Activated T-helper 2 cell treated with anti-CD3 and anti-CD28 coated beads, Interferon-gamma antibody, Interleukin-2, Interleukin-4, amounts not matched to agents 10 μg/mL and 5 μg/mL and 100 μg/mL, durations not matched to agents 14 hours and 24 hours and 36 hours (primary cell): ENCODE measurements at regions of chr12 and their contacts with region 1.

Region 1: DNA sequence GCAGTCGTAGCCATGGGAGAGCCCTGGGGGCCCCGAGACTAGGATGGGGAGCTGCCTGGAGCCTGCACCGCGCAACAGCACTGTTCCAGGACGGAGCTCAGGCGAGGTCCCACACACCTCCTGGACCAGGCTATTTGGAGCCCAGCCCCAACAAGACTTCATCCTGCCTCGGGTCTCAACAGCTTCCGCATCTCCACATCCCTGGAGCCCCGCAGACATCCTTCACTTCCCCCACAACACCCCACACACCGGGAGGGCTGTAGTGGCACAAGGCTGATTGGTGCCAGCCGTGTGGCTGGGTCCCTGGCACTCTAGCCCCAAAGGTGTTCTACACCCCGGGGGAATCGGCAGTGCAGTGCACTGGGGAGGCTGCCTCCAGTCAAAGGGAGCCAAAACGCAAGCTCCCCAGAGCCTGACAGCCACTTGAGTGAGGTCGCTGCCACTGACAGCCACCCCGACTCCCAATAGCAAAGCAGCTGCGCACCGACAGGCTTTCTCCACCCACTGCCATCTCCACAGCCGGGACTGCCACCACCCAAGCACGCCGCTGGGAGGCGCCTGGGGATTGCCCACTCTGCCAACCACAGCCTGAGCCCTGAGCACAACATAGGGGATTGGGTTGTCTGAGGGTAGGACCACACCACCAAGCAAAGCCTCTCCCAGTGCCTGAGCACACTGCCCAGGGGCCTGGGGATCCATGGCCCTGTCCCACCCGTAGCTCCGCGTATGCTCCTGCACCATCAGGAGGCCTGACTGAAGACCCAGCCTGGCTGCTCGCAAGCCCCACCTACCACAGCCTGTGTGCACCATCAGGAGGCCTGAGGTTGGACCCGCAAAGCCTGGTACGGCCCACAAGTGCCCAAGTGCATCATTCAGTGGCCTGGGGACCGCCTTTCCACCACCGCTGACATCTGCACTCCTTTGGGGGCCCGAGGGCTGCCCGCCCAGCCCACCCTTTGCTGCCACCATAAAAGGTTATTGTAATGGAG is 13.2 kb upstream of the KLRF1 start:
- DNase-seq: peak; percentile 88
- H3K4me3 Mint-ChIP-seq: peak overlapping the region; percentile 83
- H3K27ac Mint-ChIP-seq: peak overlapping the region; percentile 56
- H3K4me1 Mint-ChIP-seq: peaks cover 20% of the 10 kb centered on the region
- H3K27me3 Mint-ChIP-seq: peaks cover 18% of the 10 kb centered on the region

Region 2: GRCh38 chr12:9750276-9751203 is 63.6 kb before region 1 on chr12:
- intact Hi-C with region 1: loop called (anchors 1 kb)
- DNase-seq: peak; percentile 46
- H3K4me3 Mint-ChIP-seq: no peak overlapping the region
- H3K27ac Mint-ChIP-seq: peak overlapping the region; percentile 44
- H3K4me1 Mint-ChIP-seq: peaks cover 48% of the 10 kb centered on the region
- H3K27me3 Mint-ChIP-seq: peaks cover 1% of the 10 kb centered on the region

Region 3: DNA sequence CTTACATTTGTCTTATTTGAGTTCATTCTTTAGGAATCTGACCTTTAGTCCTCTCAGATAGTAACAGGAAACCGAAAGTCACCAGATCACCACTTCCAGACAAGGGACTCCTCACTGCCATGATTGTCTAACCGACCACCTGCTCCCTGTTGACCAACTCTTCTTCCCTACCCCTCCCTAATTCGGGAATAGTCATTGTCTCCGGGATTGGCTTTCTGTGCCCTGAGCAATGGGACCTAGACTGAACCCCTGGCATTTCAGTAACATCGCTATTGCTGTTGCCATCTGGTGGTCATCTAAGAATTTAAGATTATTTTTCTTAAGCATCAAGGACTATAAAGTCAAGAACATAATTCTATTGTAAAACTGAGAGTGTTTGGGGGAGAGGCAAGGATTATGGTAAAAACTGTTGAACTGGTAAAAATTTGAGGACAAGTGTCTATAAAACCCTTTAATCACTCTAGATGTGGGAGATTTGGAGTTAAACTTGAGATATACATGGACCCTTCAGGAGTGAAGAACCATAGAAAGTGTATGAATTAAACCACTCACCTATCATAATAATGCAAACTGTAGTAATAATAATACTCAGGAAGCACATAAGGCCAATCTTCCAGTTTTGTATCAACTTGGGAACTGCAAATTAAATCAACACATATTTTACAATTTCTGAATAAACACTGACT is 111.7 kb after region 1 on chr12:
- intact Hi-C with region 1: loop called (anchors 1 kb)
- DNase-seq: no peak
- H3K4me3 Mint-ChIP-seq: peak overlapping the region; percentile 34
- H3K27ac Mint-ChIP-seq: no peak overlapping the region
- H3K4me1 Mint-ChIP-seq: peaks cover 22% of the 10 kb centered on the region
- H3K27me3 Mint-ChIP-seq: peaks cover 28% of the 10 kb centered on the region

Region 4: GRCh38 chr12:9940375-9940774 is 126.3 kb after region 1 on chr12:
- intact Hi-C with region 1: loop called (anchors 5 kb)
- DNase-seq: no peak
- H3K4me3 Mint-ChIP-seq: no peak overlapping the region
- H3K27ac Mint-ChIP-seq: no peak overlapping the region
- H3K4me1 Mint-ChIP-seq: peaks cover 27% of the 10 kb centered on the region
- H3K27me3 Mint-ChIP-seq: peaks cover 12% of the 10 kb centered on the region

Region 5: GRCh38 chr12:10012630-10013330 is 198.7 kb after region 1 on chr12:
- intact Hi-C with region 1: loop called (anchors 5 kb)
- DNase-seq: no peak
- H3K4me3 Mint-ChIP-seq: no peak overlapping the region
- H3K27ac Mint-ChIP-seq: no peak overlapping the region
- H3K4me1 Mint-ChIP-seq: peaks cover 6% of the 10 kb centered on the region
- H3K27me3 Mint-ChIP-seq: peaks cover 40% of the 10 kb centered on the region

Region 6: DNA sequence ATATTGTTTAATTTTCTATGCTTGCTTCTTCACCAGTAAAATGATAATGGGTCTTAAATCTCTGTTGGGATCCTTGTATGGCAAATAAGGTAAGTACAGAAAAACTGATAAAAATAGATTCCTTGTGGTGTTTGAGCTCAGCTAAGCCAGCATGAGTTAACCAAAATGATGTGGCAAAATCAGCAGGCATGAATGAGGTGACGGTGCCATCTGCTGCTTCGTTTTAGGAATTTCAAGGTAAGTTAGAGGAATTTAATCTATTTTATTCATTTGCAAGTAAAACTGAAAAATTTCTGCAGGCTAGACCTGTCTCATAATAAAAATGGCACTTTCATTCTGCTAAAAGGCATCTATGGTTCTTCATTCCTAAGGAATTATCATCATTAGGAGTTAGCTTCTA is 325.9 kb after region 1 on chr12:
- intact Hi-C with region 1: loop called (anchors 5 kb)
- DNase-seq: peak; percentile 16
- H3K4me3 Mint-ChIP-seq: no peak overlapping the region
- H3K27ac Mint-ChIP-seq: no peak overlapping the region
- H3K4me1 Mint-ChIP-seq: no peaks in the 10 kb centered on the region
- H3K27me3 Mint-ChIP-seq: peaks cover 37% of the 10 kb centered on the region